K562 (cell line): ENCODE measurements at regions of chr1 and their contacts with region 1.

Region 1: GRCh38 chr1:26321315-26322041 is 3.7 kb downstream of the CD52 start:
- DNase-seq: peak; percentile 89 to 94 (median 90)
- ATAC-seq: peak; percentile 87
- H3K4me3 ChIP-seq: no peak overlapping the region
- H3K27ac ChIP-seq: no peak overlapping the region
- H3K4me1 ChIP-seq: peaks cover 39 to 52% of the 10 kb centered on the region in 2 experiments
- H3K27me3 ChIP-seq: no peaks in the 10 kb centered on the region
- CTCF ChIP-seq: peak; percentile 96 to 98 (median 97)
- EP300 ChIP-seq: peak; percentile 21; the same call in 1 of the 2 replicates
- POLR2A ChIP-seq: no peak
- RAD21 ChIP-seq: peak; percentile 99

Region 2: DNA sequence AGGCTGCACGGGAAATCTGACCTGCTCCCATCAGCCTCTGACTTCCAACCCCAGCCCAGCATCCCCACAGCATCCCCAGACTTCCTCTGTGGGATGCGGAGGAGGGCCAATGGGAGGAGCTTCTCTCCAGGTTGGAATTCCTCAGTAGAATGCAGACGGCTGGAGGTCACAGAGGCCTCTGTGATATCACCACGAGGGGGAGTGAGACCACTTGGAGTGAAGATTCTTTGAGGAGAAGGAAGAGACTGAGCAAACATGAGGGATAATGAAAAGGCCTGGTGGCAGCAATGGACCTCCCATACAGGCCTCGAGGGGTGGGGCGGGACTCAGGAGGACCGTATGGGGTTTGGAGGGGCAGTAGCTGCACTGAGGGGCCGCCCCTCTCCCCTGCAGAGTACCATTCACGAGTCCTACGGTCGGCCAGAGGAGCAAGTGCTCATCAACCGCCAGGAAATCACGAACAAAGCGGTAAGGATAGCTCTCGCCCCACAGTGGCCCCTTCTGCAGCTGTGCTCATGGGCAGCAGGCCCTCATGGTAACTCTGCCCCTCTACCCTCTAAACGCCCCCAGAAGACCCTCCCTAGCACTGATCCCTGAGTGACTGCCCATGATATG is 131.0 kb before region 1 on chr1 and contains the start of gene CATSPER4:
- CTCF ChIA-PET with region 1: no interaction called
- POLR2A ChIA-PET with region 1: no interaction called
- in situ Hi-C with region 1: no loop called
- intact Hi-C with region 1: loop called (anchors 1 kb)
- DNase-seq: peak; percentile 73 to 75 (median 74)
- ATAC-seq: peak; percentile 87
- H3K4me3 ChIP-seq: no peak within 1 kb of the TSS
- H3K27ac ChIP-seq: no peak within 1 kb of the TSS
- H3K4me1 ChIP-seq: peaks cover 0 to 23% of the 10 kb centered on the region in 2 experiments; a peak in 2 of 5 replicates
- H3K27me3 ChIP-seq: no peaks in the 10 kb centered on the region
- CTCF ChIP-seq: peak; percentile 68 to 82 (median 74)
- EP300 ChIP-seq: no peak
- POLR2A ChIP-seq: no peak
- RAD21 ChIP-seq: peak; percentile 57 to 82
- polyA plus RNA-seq, gene CATSPER4: 0.04 TPM in 1 of 2 experiments, not detected in the other

Region 3: GRCh38 chr1:26284597-26285360 is 36.7 kb before region 1 on chr1:
- CTCF ChIA-PET with region 1: interaction called, 29 read pairs
- POLR2A ChIA-PET with region 1: interaction called, 12 read pairs
- in situ Hi-C with region 1: loop called (anchors 5 kb)
- intact Hi-C with region 1: loop called (anchors 1 kb)
- DNase-seq: peak; percentile 91 to 99 (median 93)
- ATAC-seq: peak; percentile 73
- H3K4me3 ChIP-seq: no peak overlapping the region
- H3K27ac ChIP-seq: peak overlapping the region; percentile 86
- H3K4me1 ChIP-seq: peaks cover 84 to 99% of the 10 kb centered on the region in 2 experiments
- H3K27me3 ChIP-seq: no peaks in the 10 kb centered on the region
- CTCF ChIP-seq: peak; percentile 89 to 97 (median 92)
- EP300 ChIP-seq: peak; percentile 91
- POLR2A ChIP-seq: peak; percentile 27; the same call in 1 of the 2 replicates
- RAD21 ChIP-seq: peak; percentile 79 to 92

Region 4: DNA sequence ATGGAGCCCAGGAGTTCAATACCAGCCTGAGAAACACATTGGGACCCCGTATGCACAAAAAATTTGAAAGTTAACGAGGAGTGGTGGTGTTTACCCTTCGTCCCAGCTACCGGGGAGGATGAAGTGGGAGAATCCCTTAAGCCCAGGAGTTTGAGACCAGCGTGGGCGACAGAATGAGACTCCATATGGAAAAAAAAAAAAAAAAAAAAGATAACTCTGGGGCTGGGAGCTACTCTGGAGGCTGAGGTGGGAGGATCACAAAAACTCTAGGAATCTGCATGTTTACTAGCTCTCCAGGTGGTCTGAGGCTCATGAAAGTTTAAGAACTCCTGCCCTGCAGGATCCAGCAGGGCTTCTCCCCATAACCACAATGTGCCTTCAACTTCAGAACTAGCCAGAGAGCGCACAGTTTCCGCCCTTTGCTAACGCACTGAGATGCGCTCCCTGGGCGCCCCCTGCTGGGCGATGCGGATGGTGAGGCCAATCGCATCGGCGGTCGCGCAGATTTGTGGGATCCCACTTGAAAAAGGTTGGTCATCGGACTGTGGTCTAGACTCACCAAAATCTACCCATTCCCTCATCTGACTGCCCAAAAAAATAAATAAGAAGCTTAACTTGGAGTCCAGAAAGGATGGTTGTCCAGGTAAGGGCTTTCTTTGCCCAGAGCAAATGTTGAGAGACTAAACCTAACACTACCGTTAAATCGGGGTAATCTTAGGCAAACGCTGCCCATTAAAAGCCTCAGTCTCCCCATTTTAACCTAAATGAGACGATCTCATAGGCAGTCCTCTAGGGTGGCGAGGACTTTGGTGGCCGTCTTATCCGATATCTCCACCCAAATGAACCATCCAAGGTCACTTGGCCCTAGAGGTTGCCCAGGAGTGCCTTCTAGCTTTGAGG is 42.3 kb after region 1 on chr1:
- CTCF ChIA-PET with region 1: no interaction called
- POLR2A ChIA-PET with region 1: interaction called, 5 read pairs
- in situ Hi-C with region 1: no loop called
- intact Hi-C with region 1: loop called (anchors 2 kb)
- DNase-seq: peak; percentile 88 to 95 (median 90)
- ATAC-seq: peak; percentile 96
- H3K4me3 ChIP-seq: no peak overlapping the region
- H3K27ac ChIP-seq: no peak overlapping the region
- H3K4me1 ChIP-seq: peaks cover 4 to 34% of the 10 kb centered on the region in 2 experiments; a peak in 4 of 5 replicates
- H3K27me3 ChIP-seq: no peaks in the 10 kb centered on the region; a peak in 1 of 5 replicates
- CTCF ChIP-seq: peak; percentile 97 to 100 (median 99)
- EP300 ChIP-seq: 0 out of 2 replicates have a peak, but pooled peaks have one; percentile 29
- POLR2A ChIP-seq: no peak
- RAD21 ChIP-seq: peak; percentile 89 to 98

Region 5: DNA sequence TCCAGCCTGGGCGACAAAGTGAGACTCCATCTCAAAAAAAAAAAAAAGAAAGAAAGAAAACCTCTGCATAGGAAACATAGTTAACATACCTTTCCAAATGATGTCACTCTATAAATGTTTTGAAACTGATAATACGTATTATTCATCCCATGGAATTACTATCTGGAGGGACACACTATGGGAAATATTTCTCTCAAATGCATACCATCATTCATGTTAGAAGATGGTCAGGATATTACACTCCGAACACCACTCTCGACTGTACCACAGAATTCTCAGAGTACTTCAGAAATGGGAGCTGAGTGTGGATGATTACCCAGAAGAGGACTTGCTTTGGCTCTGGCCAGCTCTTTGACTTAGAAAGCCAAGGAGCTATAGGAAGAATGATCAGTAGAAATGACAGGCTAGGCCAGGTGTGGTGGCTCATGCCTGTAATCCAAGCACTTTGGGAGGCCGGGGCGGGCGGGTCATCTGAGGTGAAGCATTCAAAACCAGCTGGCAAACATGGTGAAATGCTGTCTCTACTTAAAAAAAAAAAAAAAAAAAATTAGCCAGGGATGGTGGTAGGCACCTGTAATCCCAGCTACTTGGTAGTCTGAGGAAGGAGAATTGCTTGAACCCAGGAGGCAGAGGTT is 83.9 kb after region 1 on chr1:
- CTCF ChIA-PET with region 1: no interaction called
- POLR2A ChIA-PET with region 1: no interaction called
- in situ Hi-C with region 1: no loop called
- intact Hi-C with region 1: no loop called
- DNase-seq: no peak
- ATAC-seq: no peak
- H3K4me3 ChIP-seq: no peak overlapping the region
- H3K27ac ChIP-seq: no peak overlapping the region
- H3K4me1 ChIP-seq: peaks cover 6 to 15% of the 10 kb centered on the region in 2 experiments; a peak in 4 of 5 replicates
- H3K27me3 ChIP-seq: peaks cover 7 to 20% of the 10 kb centered on the region in 2 experiments; a peak in 4 of 5 replicates
- CTCF ChIP-seq: no peak
- EP300 ChIP-seq: no peak
- POLR2A ChIP-seq: no peak
- RAD21 ChIP-seq: no peak